Naive thymus-derived CD4-positive, alpha-beta T cell (primary cell): ENCODE measurements at regions of chr11 and their contacts with region 1.

Region 1: GRCh38 chr11:57474017-57474802 is 13.9 kb downstream of the RTN4RL2 start:
- DNase-seq: peak in 5 of 9 donors; percentile 40 to 54 (median 48)
- ATAC-seq: peak; percentile 67
- H3K4me3 ChIP-seq: peak overlapping the region; percentile 40
- H3K4me3 Mint-ChIP-seq: peak overlapping the region; percentile 40 to 84 (median 65)
- H3K27ac ChIP-seq: no peak overlapping the region
- H3K27ac Mint-ChIP-seq: peak overlapping the region in 7 of 9 donors; percentile 39 to 91 (median 72)
- H3K4me1 ChIP-seq: peaks cover 10 to 27% of the 10 kb centered on the region in 2 donors
- H3K4me1 Mint-ChIP-seq: peaks cover 12 to 42% (median 29%) of the 10 kb centered on the region in 7 donors
- H3K27me3 ChIP-seq: no peaks in the 10 kb centered on the region
- H3K27me3 Mint-ChIP-seq: peaks cover 0 to 49% (median 5%) of the 10 kb centered on the region in 5 donors

Region 2: DNA sequence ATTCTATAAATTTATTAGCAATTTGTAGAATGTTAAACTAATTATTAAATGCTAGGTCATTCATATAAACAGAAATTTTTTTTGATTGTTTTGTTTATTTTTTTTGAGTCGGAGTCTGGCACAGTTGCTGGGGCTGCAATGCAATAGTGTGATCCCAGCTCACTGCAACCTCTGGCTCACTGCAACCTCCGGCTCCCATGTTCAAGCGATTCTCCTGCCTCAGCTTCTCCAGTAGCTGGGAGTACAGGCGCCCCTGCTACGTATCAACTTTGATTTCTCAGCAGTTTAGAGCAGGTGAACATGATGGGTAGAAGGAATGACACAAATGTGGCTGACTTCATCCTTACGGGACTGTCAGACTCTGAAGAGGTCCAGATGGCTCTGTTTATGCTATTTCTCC is 1352.1 kb before region 1 on chr11 and contains the start of gene OR8H3:
- CTCF ChIA-PET with region 1: no interaction called
- POLR2A ChIA-PET with region 1: no interaction called
- intact Hi-C with region 1: no loop called
- DNase-seq: no peak
- ATAC-seq: no peak
- H3K4me3 ChIP-seq: no peak within 1 kb of the TSS
- H3K4me3 Mint-ChIP-seq: no peak within 1 kb of the TSS
- H3K27ac ChIP-seq: no peak within 1 kb of the TSS
- H3K27ac Mint-ChIP-seq: no peak within 1 kb of the TSS
- H3K4me1 ChIP-seq: no peaks in the 10 kb centered on the region
- H3K4me1 Mint-ChIP-seq: no peaks in the 10 kb centered on the region
- H3K27me3 ChIP-seq: no peaks in the 10 kb centered on the region
- H3K27me3 Mint-ChIP-seq: no peaks in the 10 kb centered on the region
- total RNA-seq, gene OR8H3: not detected

Region 3: DNA sequence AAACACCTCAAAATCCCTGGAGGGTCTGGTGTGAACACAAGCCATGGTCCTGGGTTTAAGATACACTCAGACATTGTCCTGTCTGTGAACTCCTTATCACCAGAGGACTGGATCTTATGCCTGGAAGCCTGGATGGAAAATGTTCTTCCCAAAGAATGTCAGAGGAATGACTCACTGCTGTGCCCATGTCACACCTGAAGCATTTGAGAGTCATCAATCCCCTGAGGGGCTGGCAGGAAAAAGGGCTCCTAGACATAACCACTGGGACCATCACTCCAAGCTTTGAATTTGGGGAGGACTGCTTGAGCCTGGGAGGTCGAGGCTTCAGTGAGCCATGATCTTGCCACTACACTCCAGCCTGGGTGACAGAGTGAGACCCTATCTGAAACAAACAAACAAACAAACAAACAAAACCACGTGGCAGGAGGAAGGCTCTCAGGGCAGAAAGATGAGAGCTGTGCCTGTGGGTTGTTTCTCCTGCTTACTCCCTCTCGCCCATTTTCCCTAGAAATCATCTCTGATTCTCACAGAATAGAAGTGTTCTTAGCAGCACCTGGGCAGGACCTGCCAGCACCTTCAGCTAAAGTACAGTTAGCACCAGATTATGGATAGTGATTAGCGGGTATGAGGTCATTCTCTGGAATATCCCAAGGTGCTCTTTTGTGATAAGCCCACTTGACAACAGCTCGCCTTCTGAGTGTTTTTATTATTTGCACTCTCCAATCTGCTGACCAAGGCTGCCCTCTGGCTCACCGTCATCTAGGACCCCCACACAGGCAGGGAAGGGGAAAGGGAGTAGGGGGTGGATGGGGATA is 71.8 kb before region 1 on chr11:
- CTCF ChIA-PET with region 1: interaction called, 3 read pairs
- POLR2A ChIA-PET with region 1: no interaction called
- intact Hi-C with region 1: loop called in 1 of 2 experiments (anchors 2 kb)
- DNase-seq: no peak
- ATAC-seq: no peak
- H3K4me3 ChIP-seq: no peak overlapping the region
- H3K4me3 Mint-ChIP-seq: no peak overlapping the region
- H3K27ac ChIP-seq: no peak overlapping the region
- H3K27ac Mint-ChIP-seq: no peak overlapping the region
- H3K4me1 ChIP-seq: no peaks in the 10 kb centered on the region
- H3K4me1 Mint-ChIP-seq: peaks cover 0 to 17% (median 7%) of the 10 kb centered on the region in 7 donors
- H3K27me3 ChIP-seq: no peaks in the 10 kb centered on the region
- H3K27me3 Mint-ChIP-seq: no peaks in the 10 kb centered on the region